A673 (cell line): ENCODE measurements at regions of chr12 and their contacts with region 1.

Region 1: GRCh38 chr12:112125250-112125999 is at the start of gene TRAFD1:
- DNase-seq: peak; percentile 99
- H3K4me3 ChIP-seq: peak within 1 kb of the TSS; percentile 84
- H3K27ac ChIP-seq: peak within 1 kb of the TSS; percentile 84
- H3K4me1 ChIP-seq: peaks cover 41% of the 10 kb centered on the region
- H3K27me3 ChIP-seq: no peaks in the 10 kb centered on the region
- CTCF ChIP-seq: no peak
- total RNA-seq, gene TRAFD1: 35.2 and 37.8 TPM in 2 replicates

Region 2: DNA sequence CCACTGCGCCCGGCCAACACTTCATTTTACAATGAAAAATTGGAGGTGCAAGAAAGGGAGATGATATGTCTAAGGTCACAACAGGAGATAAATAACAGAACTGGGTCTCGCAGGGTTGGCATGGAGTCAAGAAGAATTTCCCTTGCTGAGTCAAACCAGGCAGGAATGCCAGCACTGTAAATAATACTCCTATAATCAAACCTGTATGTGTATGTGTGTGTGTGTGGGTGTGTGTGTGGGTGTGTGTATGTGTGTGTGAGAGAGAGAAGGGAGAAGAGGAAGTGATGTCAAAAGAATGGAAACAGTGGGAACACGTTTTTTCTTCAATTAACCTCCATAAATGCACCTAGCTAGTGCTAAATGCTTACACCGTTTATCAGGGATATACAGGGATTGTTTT is 182.9 kb before region 1 on chr12:
- CTCF ChIA-PET with region 1: no interaction called
- POLR2A ChIA-PET with region 1: interaction called, 13 read pairs
- intact Hi-C with region 1: no loop called
- DNase-seq: no peak
- H3K4me3 ChIP-seq: no peak overlapping the region
- H3K27ac ChIP-seq: no peak overlapping the region
- H3K4me1 ChIP-seq: no peaks in the 10 kb centered on the region
- H3K27me3 ChIP-seq: no peaks in the 10 kb centered on the region
- CTCF ChIP-seq: no peak

Region 3: DNA sequence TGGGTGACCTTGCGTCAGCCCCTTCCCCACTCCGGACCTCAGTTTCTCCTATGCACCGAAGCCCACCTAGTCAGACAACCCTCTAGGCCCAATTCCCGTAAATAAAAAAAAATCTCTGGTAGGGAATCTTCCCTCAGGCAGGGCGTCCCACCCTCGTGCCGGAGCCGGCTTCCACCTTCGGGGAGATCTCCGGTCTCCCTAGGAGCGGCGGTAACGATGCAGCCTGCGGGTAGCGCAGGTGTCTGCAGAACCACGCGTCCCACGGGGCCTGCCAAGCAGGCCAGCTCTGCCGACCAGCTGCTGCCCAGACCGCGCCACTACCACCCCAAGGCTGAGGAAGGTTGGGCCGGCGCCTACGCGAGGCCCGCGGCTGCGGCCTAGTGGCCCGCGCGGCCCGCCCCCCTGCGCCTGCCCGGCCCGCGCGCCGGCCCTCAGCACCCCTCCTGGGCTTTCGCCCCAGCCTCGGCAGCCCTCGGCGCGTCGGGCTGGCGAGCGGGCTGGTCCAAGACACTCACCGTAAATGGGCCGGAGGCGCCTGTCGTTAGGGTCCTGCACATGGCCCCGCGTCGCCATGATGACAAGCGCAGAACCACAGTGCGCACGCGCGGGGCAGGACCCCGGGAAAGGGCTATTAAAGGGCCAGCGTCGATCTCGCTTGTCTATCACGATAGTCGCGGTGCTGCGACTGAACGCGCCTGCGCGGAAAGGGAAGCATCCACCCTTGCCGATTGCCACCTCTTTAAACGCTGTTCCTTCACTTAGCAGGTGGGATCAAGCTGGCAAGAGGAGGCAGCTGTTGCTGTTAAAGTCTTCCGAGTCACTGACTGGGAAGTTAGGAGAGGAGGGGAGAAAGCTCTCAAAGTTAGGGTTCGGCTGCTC is 17.0 kb before region 1 on chr12 and contains the start of gene NAA25:
- CTCF ChIA-PET with region 1: interaction called, 6 read pairs
- POLR2A ChIA-PET with region 1: no interaction called
- intact Hi-C with region 1: loop called (anchors 1 kb)
- DNase-seq: peak; percentile 91
- H3K4me3 ChIP-seq: peak within 1 kb of the TSS; percentile 94
- H3K27ac ChIP-seq: peak within 1 kb of the TSS; percentile 96
- H3K4me1 ChIP-seq: peaks cover 24% of the 10 kb centered on the region
- H3K27me3 ChIP-seq: no peaks in the 10 kb centered on the region
- CTCF ChIP-seq: no peak
- total RNA-seq, gene NAA25: 67.4 and 70.5 TPM in 2 replicates

Region 4: DNA sequence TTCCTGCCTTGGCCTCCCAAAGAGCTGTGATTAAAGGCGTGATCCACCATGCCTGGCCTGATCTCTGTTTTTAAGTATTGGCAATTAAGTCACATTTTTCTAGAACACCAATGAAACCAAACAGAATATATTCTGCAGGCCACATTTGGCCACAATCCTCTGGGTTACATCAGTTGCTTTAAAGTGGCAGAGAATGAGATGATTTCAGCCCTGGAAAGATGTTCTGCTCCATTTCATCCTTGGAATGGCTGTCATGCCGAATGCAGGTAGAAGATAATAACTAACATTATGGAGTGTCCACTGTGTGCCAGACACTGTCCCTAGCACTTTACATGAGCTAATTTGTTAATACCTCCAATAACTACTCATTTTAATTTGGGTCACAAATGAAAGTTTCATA is 447.7 kb after region 1 on chr12:
- CTCF ChIA-PET with region 1: interaction called, 11 read pairs
- POLR2A ChIA-PET with region 1: no interaction called
- intact Hi-C with region 1: no loop called
- DNase-seq: no peak
- H3K4me3 ChIP-seq: no peak overlapping the region
- H3K27ac ChIP-seq: no peak overlapping the region
- H3K4me1 ChIP-seq: no peaks in the 10 kb centered on the region
- H3K27me3 ChIP-seq: no peaks in the 10 kb centered on the region
- CTCF ChIP-seq: no peak